Naive thymus-derived CD4-positive, alpha-beta T cell (primary cell): ENCODE measurements at regions of chr14 and their contacts with region 1.

Region 1: GRCh38 chr14:20343092-20343861 is at the start of gene PARP2:
- DNase-seq: peak; percentile 82 to 94 (median 93)
- ATAC-seq: peak; percentile 86
- H3K4me3 ChIP-seq: peak within 1 kb of the TSS; percentile 74
- H3K4me3 Mint-ChIP-seq: peak within 1 kb of the TSS; percentile 82 to 99 (median 95)
- H3K27ac ChIP-seq: peak within 1 kb of the TSS; percentile 91
- H3K27ac Mint-ChIP-seq: peak within 1 kb of the TSS; percentile 91 to 98 (median 97)
- H3K4me1 ChIP-seq: peaks cover 4 to 5% of the 10 kb centered on the region in 2 donors
- H3K4me1 Mint-ChIP-seq: peaks cover 6 to 27% (median 18%) of the 10 kb centered on the region in 7 donors
- H3K27me3 ChIP-seq: no peaks in the 10 kb centered on the region
- H3K27me3 Mint-ChIP-seq: peaks cover 0 to 7% (median 0%) of the 10 kb centered on the region in 5 donors
- total RNA-seq, gene PARP2: 15.3 to 24.5 (median 21.3) TPM

Region 2: DNA sequence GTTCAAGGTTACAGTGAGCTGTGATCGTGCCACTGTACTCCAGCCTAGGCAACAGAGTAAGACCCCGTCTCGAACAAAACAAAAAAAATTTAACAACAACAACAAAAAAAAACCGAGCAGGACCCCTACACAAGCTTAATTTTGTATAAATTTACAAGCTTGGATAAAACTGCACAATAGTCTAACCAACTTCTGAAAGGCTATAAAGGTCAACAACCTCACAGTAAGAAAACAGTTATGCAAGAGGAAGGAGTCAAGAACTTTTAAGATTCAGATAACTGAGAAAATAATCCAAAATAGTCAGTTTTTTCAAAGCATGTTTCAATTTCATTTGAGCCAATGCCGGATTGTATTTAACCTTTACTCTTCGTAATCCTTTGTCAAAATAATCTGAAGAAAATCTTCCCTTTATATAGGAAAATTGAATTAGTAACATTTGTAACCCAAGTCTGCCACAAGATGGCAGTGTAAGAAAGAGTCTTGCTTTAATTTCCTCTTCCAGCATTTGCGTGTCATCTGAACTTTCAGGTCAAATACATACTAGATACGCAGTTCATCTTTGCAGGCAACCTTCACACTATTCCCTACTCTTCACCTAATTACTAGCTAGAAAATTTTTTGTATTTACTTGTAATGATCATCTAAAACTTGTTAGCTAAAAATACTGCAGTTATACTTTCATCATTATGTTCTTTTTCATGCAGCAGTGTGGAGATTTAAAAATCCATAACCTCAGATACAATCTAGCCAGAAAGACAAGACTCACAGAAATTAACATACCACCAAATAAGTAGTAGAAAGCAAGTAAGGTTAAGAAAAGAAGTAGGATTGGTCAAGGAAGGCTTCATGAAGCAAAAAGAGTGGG is 16.0 kb before region 1 on chr14:
- CTCF ChIA-PET with region 1: interaction called, 68 read pairs
- POLR2A ChIA-PET with region 1: interaction called, 35 read pairs
- intact Hi-C with region 1: loop called (anchors 1 to 2 kb)
- DNase-seq: peak in 7 of 9 donors; percentile 44 to 74 (median 66)
- ATAC-seq: peak; percentile 81
- H3K4me3 ChIP-seq: no peak overlapping the region
- H3K4me3 Mint-ChIP-seq: peak overlapping the region in 5 of 10 donors; percentile 2 to 52 (median 26)
- H3K27ac ChIP-seq: no peak overlapping the region
- H3K27ac Mint-ChIP-seq: peak overlapping the region; percentile 35 to 93 (median 66)
- H3K4me1 ChIP-seq: peaks cover 0 to 4% of the 10 kb centered on the region in 2 donors
- H3K4me1 Mint-ChIP-seq: peaks cover 9 to 42% (median 27%) of the 10 kb centered on the region in 7 donors
- H3K27me3 ChIP-seq: no peaks in the 10 kb centered on the region
- H3K27me3 Mint-ChIP-seq: no peaks in the 10 kb centered on the region

Region 3: GRCh38 chr14:20387576-20387975 is 44.3 kb after region 1 on chr14:
- CTCF ChIA-PET with region 1: no interaction called
- POLR2A ChIA-PET with region 1: no interaction called
- intact Hi-C with region 1: no loop called
- DNase-seq: no peak
- ATAC-seq: peak; percentile 80
- H3K4me3 ChIP-seq: no peak overlapping the region
- H3K4me3 Mint-ChIP-seq: no peak overlapping the region
- H3K27ac ChIP-seq: no peak overlapping the region
- H3K27ac Mint-ChIP-seq: no peak overlapping the region
- H3K4me1 ChIP-seq: no peaks in the 10 kb centered on the region
- H3K4me1 Mint-ChIP-seq: peaks cover 0 to 7% (median 0%) of the 10 kb centered on the region in 7 donors
- H3K27me3 ChIP-seq: no peaks in the 10 kb centered on the region
- H3K27me3 Mint-ChIP-seq: no peaks in the 10 kb centered on the region

Region 4: DNA sequence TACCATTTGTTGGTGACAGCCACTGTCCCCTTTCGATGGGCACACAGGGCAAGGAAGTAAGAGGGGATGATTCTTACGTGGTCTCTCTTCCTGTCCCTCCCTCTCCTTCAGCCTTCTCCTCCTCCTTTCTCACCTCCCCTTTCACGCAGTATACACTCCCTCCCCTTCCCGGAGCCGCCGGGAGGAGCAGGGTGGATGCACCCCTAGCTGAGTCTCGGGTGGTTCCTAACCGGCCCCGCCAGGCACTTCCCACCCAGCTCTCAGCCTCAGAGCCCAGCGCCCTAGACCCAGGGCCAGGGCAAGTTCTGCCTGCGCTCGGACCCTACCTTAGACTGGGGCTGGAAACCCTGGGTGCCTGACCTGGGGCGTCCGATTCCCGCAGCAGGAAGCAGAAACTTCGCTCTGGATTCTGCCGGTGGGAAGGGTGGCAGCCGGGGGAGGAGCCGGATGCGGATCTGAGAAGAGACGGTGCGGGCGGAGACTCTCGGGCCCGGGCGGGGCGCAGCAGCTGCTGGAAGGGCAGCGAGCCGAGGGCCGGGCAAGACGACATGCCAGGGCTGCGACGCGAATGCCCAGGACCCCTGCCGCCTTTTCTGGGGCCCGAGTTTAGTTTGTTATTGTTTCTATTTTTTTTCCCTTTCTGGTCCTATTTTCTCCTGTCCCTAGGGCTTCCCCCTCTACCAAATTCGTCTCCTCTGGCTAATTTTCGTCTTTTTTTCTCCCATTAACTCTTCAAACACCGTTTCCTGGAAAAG is 69.9 kb after region 1 on chr14 and contains the start of gene TEP1:
- CTCF ChIA-PET with region 1: interaction called, 12 read pairs
- POLR2A ChIA-PET with region 1: interaction called, 9 read pairs
- intact Hi-C with region 1: loop called (anchors 1 kb)
- DNase-seq: peak; percentile 46 to 75 (median 57)
- ATAC-seq: peak; percentile 80
- H3K4me3 ChIP-seq: peak within 1 kb of the TSS; percentile 71
- H3K4me3 Mint-ChIP-seq: peak within 1 kb of the TSS; percentile 94 to 100 (median 97)
- H3K27ac ChIP-seq: peak within 1 kb of the TSS; percentile 86
- H3K27ac Mint-ChIP-seq: peak within 1 kb of the TSS; percentile 90 to 99 (median 93)
- H3K4me1 ChIP-seq: peaks cover 8 to 17% of the 10 kb centered on the region in 2 donors
- H3K4me1 Mint-ChIP-seq: peaks cover 31 to 59% (median 46%) of the 10 kb centered on the region in 7 donors
- H3K27me3 ChIP-seq: no peaks in the 10 kb centered on the region
- H3K27me3 Mint-ChIP-seq: no peaks in the 10 kb centered on the region
- total RNA-seq, gene TEP1: 23.5 to 56.0 (median 43.6) TPM

Region 5: DNA sequence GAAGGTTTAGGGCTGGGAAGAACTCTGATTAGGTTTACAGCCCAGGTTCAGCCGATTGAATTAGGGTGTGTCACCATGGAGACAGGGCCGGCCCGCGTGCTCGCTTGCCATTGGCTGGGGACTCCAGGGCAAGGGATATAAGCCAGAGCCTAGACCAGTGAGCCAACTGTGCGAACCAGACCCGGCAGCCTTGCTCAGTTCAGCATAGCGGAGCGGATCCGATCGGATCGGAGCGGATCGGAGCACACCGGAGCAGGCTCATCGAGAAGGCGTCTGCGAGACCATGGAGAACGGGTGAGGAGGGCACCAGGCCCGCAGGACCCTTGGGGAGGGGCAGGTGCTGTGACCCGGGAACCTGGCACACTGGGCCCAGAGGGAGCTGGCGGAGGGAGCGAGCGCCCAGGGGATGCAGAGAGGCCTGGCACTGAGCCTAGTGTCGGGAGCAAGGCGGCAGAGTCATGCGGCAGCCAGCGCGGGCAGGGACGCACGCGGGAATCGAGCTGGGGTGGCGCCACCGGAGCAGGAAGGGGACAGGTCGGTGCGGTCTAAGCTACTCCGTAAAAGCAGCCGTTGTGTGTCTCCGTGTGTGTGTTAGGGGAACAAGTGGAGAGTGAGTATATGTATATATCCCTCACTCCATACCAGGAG is 126.1 kb after region 1 on chr14 and contains the start of gene PNP:
- CTCF ChIA-PET with region 1: no interaction called
- POLR2A ChIA-PET with region 1: interaction called, 12 read pairs
- intact Hi-C with region 1: loop called in 1 of 2 experiments (anchors 1 kb)
- DNase-seq: peak; percentile 74 to 88 (median 84)
- ATAC-seq: peak; percentile 94
- H3K4me3 ChIP-seq: peak within 1 kb of the TSS; percentile 87
- H3K4me3 Mint-ChIP-seq: peak within 1 kb of the TSS; percentile 95 to 100 (median 99)
- H3K27ac ChIP-seq: peak within 1 kb of the TSS; percentile 87
- H3K27ac Mint-ChIP-seq: peak within 1 kb of the TSS; percentile 89 to 98 (median 97)
- H3K4me1 ChIP-seq: peaks cover 13 to 32% of the 10 kb centered on the region in 2 donors
- H3K4me1 Mint-ChIP-seq: peaks cover 40 to 49% (median 43%) of the 10 kb centered on the region in 7 donors
- H3K27me3 ChIP-seq: no peaks in the 10 kb centered on the region
- H3K27me3 Mint-ChIP-seq: peaks cover 0 to 6% (median 0%) of the 10 kb centered on the region in 5 donors
- total RNA-seq, gene PNP: 58.9 to 179 (median 83.0) TPM

Region 6: GRCh38 chr14:20632682-20633428 is 289.6 kb after region 1 on chr14:
- CTCF ChIA-PET with region 1: interaction called, 3 read pairs
- POLR2A ChIA-PET with region 1: no interaction called
- intact Hi-C with region 1: loop called in 1 of 2 experiments (anchors 1 kb)
- DNase-seq: peak in 8 of 9 donors; percentile 45 to 80 (median 64)
- ATAC-seq: peak; percentile 70
- H3K4me3 ChIP-seq: peak overlapping the region; percentile 51
- H3K4me3 Mint-ChIP-seq: peak overlapping the region; percentile 74 to 93 (median 88)
- H3K27ac ChIP-seq: no peak overlapping the region
- H3K27ac Mint-ChIP-seq: peak overlapping the region; percentile 77 to 98 (median 88)
- H3K4me1 ChIP-seq: peaks cover 0 to 11% of the 10 kb centered on the region in 2 donors
- H3K4me1 Mint-ChIP-seq: peaks cover 17 to 59% (median 45%) of the 10 kb centered on the region in 7 donors
- H3K27me3 ChIP-seq: no peaks in the 10 kb centered on the region
- H3K27me3 Mint-ChIP-seq: peaks cover 26 to 82% (median 35%) of the 10 kb centered on the region in 5 donors

Region 7: DNA sequence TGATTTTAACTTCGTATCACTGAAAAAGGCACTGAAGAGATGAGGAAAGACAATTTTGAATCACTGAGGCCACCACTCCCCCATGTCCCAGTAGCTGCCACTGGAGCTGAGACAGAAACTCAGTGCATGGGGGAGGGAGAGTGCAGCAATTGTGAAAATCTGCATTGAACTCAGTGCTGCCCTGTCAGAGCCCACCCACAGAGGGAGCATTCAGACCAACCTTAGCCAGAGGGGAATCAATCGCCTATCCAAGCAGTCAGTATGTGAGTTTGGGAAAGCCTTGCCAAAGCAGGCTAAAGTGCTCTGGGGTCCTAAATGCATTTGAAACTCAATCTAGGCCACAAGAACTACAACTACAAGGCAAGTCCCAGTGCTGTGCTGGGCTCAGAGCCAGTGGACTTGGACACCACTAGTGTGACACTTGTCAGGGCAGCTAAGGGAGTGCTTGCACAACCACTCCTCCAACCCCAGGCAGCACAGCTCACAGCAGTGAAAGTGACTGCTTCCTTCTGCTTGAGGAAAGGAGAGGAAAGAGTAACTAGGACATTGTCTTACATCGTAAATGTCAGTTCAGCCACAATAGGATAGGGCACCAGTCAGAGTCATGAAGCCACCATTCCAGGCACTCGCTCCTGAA is 561.2 kb after region 1 on chr14:
- CTCF ChIA-PET with region 1: no interaction called
- POLR2A ChIA-PET with region 1: no interaction called
- intact Hi-C with region 1: no loop called
- DNase-seq: no peak
- ATAC-seq: peak; percentile 37
- H3K4me3 ChIP-seq: no peak overlapping the region
- H3K4me3 Mint-ChIP-seq: no peak overlapping the region
- H3K27ac ChIP-seq: no peak overlapping the region
- H3K27ac Mint-ChIP-seq: peak overlapping the region in 1 of 9 donors; percentile 2
- H3K4me1 ChIP-seq: no peaks in the 10 kb centered on the region
- H3K4me1 Mint-ChIP-seq: peaks cover 0 to 8% (median 0%) of the 10 kb centered on the region in 7 donors
- H3K27me3 ChIP-seq: no peaks in the 10 kb centered on the region
- H3K27me3 Mint-ChIP-seq: peaks cover 3 to 27% (median 22%) of the 10 kb centered on the region in 5 donors